K562 (cell line): ENCODE measurements at regions of chr7 and their contacts with region 1.

Region 1: GRCh38 chr7:91264046-91264923 is at the start of gene FZD1:
- DNase-seq: peak; percentile 90 to 99 (median 91)
- ATAC-seq: peak; percentile 94
- H3K4me3 ChIP-seq: peak within 1 kb of the TSS; percentile 80
- H3K27ac ChIP-seq: peak within 1 kb of the TSS; percentile 77
- H3K4me1 ChIP-seq: peaks cover 3 to 37% of the 10 kb centered on the region in 2 experiments; a peak in 3 of 5 replicates
- H3K27me3 ChIP-seq: no peaks in the 10 kb centered on the region
- CTCF ChIP-seq: no peak
- EP300 ChIP-seq: peak; percentile 62
- POLR2A ChIP-seq: peak; percentile 89
- RAD21 ChIP-seq: peak in 1 of 2 experiments; percentile 16; a peak in 3 of 4 replicates
- polyA plus RNA-seq, gene FZD1: 0.25 to 0.27 TPM

Region 2: GRCh38 chr7:90629297-90629918 is 634.9 kb before region 1 on chr7:
- CTCF ChIA-PET with region 1: no interaction called
- POLR2A ChIA-PET with region 1: no interaction called
- in situ Hi-C with region 1: no loop called
- intact Hi-C with region 1: no loop called
- DNase-seq: peak in 3 of 4 experiments; percentile 16 to 43 (median 37)
- ATAC-seq: peak; percentile 92
- H3K4me3 ChIP-seq: no peak overlapping the region
- H3K27ac ChIP-seq: no peak overlapping the region
- H3K4me1 ChIP-seq: no peaks in the 10 kb centered on the region
- H3K27me3 ChIP-seq: no peaks in the 10 kb centered on the region
- CTCF ChIP-seq: peak; percentile 34 to 69 (median 59); a peak in 4 of 6 replicates
- EP300 ChIP-seq: no peak
- POLR2A ChIP-seq: no peak
- RAD21 ChIP-seq: peak in 1 of 2 experiments; percentile 26; a peak in 1 of 4 replicates

Region 3: GRCh38 chr7:91235211-91235832 is 29.0 kb before region 1 on chr7:
- CTCF ChIA-PET with region 1: no interaction called
- POLR2A ChIA-PET with region 1: no interaction called
- in situ Hi-C with region 1: no loop called
- intact Hi-C with region 1: no loop called
- DNase-seq: no peak
- ATAC-seq: no peak
- H3K4me3 ChIP-seq: no peak overlapping the region
- H3K27ac ChIP-seq: no peak overlapping the region
- H3K4me1 ChIP-seq: no peaks in the 10 kb centered on the region
- H3K27me3 ChIP-seq: peaks cover 30 to 31% of the 10 kb centered on the region in 2 experiments
- CTCF ChIP-seq: no peak
- EP300 ChIP-seq: no peak
- POLR2A ChIP-seq: no peak
- RAD21 ChIP-seq: no peak

Region 4: GRCh38 chr7:91330866-91331265 is 66.6 kb after region 1 on chr7:
- CTCF ChIA-PET with region 1: no interaction called
- POLR2A ChIA-PET with region 1: no interaction called
- in situ Hi-C with region 1: no loop called
- intact Hi-C with region 1: no loop called
- DNase-seq: no peak
- ATAC-seq: no peak; the same call in 2 of the 3 replicates
- H3K4me3 ChIP-seq: no peak overlapping the region
- H3K27ac ChIP-seq: no peak overlapping the region
- H3K4me1 ChIP-seq: peaks cover 0 to 4% of the 10 kb centered on the region in 2 experiments; a peak in 2 of 5 replicates
- H3K27me3 ChIP-seq: no peaks in the 10 kb centered on the region; a peak in 2 of 5 replicates
- CTCF ChIP-seq: no peak
- EP300 ChIP-seq: no peak
- POLR2A ChIP-seq: no peak
- RAD21 ChIP-seq: no peak

Region 5: GRCh38 chr7:91869661-91870060 is 605.4 kb after region 1 on chr7:
- CTCF ChIA-PET with region 1: no interaction called
- POLR2A ChIA-PET with region 1: no interaction called
- in situ Hi-C with region 1: no loop called
- intact Hi-C with region 1: loop called (anchors 10 kb)
- DNase-seq: peak in 1 of 4 experiments; percentile 14
- ATAC-seq: peak; percentile 69
- H3K4me3 ChIP-seq: no peak overlapping the region
- H3K27ac ChIP-seq: no peak overlapping the region
- H3K4me1 ChIP-seq: no peaks in the 10 kb centered on the region
- H3K27me3 ChIP-seq: no peaks in the 10 kb centered on the region
- CTCF ChIP-seq: peak in 2 of 3 experiments; percentile 17 to 33; a peak in 1 of 6 replicates
- EP300 ChIP-seq: no peak
- POLR2A ChIP-seq: no peak
- RAD21 ChIP-seq: peak in 1 of 2 experiments; percentile 15; a peak in 1 of 4 replicates